ENCODE measurements at regions of chr3 and their contacts with region 1.

Region 1: DNA sequence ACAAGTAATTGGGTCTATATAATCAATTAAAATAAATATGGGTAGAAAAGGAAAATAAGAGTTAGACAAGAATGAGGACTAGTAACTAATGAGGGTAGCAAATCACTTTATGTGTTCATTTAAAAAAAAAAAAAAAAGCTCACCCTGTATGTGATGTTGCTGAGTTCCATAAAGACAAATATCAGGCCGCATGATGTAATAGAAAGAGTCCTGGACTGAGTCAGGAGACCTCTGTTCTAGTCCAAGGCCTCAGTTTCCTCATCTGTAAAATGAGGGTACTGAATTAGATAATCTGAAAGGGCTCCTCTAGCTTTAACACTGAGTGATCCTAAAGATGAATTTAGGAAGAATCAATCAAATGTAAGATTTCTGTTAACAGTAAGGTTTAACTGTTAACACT is 117.6 kb downstream of the TBL1XR1 start:
- DNase-seq: no peak
- ATAC-seq: no peak
- H3K4me3 ChIP-seq: no peak overlapping the region
- H3K4me3 Mint-ChIP-seq: no peak overlapping the region
- H3K27ac ChIP-seq: no peak overlapping the region
- H3K27ac Mint-ChIP-seq: peak overlapping the region; percentile 41
- H3K4me1 ChIP-seq: no peaks in the 10 kb centered on the region
- H3K4me1 Mint-ChIP-seq: peaks cover 51% of the 10 kb centered on the region
- H3K27me3 ChIP-seq: no peaks in the 10 kb centered on the region
- H3K27me3 Mint-ChIP-seq: no peaks in the 10 kb centered on the region
- CTCF ChIP-seq: no peak

Region 2: DNA sequence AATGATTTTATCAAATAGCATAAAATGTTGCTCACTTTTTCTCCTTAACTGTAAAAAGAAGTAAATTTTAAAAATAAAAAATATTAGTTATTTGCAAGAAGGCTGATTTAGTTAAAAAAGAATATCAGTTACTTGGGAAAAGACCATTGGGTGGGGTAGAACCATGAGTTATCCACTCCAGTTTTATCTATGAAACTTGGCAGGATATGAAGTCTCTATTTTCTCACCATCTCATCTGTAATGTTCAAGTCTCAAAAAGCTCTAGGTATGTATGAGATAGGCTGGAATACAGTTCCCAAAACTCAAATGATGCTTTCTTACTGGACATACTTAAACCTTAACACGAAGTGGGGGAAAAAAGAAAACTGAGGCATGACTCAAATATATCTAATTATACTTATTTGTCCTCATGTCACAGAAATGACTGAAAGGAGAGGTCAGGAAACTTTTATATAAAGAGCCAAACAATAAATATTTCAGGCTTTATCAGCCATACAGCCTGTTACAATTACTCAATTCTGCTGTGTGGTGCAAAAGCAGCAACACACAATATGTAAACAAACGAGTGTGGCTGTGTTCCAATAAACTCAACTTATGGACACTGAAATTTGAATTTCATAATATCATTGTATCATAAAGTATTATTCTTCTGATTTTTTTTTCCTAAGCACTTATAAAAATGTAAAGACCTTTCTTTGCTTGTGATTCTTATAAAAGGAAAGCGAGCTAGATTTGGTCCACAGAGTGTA is 14.2 kb before region 1 on chr3:
- CTCF ChIA-PET with region 1: interaction called, 3 read pairs
- POLR2A ChIA-PET with region 1: no interaction called
- intact Hi-C with region 1: loop called in 1 of 2 experiments (anchors 2 kb)
- DNase-seq: no peak
- ATAC-seq: no peak
- H3K4me3 ChIP-seq: no peak overlapping the region
- H3K4me3 Mint-ChIP-seq: no peak overlapping the region
- H3K27ac ChIP-seq: no peak overlapping the region
- H3K27ac Mint-ChIP-seq: no peak overlapping the region
- H3K4me1 ChIP-seq: peaks cover 26% of the 10 kb centered on the region
- H3K4me1 Mint-ChIP-seq: peaks cover 82% of the 10 kb centered on the region
- H3K27me3 ChIP-seq: no peaks in the 10 kb centered on the region
- H3K27me3 Mint-ChIP-seq: no peaks in the 10 kb centered on the region
- CTCF ChIP-seq: no peak

Region 3: DNA sequence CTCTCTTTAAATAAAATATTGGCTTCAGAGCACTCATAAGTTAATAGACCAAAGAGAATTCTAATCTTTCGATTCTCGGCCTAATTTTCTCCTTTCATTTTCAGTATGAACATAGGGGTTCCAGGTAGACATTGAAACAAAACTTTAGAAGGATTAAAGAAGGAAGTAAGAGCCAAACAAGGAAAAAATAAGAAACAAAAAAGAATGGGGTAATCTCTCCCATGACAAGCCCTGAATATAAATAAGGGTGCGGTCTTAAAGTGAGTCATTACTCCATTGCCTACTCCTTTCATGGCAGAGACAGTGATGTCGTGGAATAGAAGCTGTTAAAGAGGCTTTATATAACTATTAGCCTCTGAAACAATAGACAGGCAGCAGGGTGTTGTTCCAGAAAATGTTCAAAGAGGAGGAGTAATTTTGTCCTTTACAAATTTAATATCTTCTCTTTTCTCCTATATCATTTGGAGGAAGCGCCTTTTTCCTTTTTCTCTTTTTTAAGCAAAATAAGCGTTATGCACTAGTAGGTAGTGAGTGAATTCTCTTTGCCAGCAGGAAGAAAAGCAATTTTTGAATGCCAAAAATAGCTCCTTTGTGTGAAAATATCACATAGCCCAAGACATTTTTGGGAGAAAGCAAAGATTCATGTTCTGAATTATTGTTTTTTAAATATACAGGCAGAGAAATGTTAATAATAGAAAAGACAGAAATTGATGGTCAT is 848.6 kb after region 1 on chr3:
- CTCF ChIA-PET with region 1: no interaction called
- POLR2A ChIA-PET with region 1: no interaction called
- intact Hi-C with region 1: no loop called
- DNase-seq: no peak
- ATAC-seq: no peak
- H3K4me3 ChIP-seq: no peak overlapping the region
- H3K4me3 Mint-ChIP-seq: no peak overlapping the region
- H3K27ac ChIP-seq: no peak overlapping the region
- H3K27ac Mint-ChIP-seq: no peak overlapping the region
- H3K4me1 ChIP-seq: no peaks in the 10 kb centered on the region
- H3K4me1 Mint-ChIP-seq: no peaks in the 10 kb centered on the region
- H3K27me3 ChIP-seq: no peaks in the 10 kb centered on the region
- H3K27me3 Mint-ChIP-seq: no peaks in the 10 kb centered on the region
- CTCF ChIP-seq: no peak

Measured in CD8-positive, alpha-beta T cell (primary cell).